GM10248 (cell line): ENCODE measurements at regions of chr15 and their contacts with region 1.

Region 1: DNA sequence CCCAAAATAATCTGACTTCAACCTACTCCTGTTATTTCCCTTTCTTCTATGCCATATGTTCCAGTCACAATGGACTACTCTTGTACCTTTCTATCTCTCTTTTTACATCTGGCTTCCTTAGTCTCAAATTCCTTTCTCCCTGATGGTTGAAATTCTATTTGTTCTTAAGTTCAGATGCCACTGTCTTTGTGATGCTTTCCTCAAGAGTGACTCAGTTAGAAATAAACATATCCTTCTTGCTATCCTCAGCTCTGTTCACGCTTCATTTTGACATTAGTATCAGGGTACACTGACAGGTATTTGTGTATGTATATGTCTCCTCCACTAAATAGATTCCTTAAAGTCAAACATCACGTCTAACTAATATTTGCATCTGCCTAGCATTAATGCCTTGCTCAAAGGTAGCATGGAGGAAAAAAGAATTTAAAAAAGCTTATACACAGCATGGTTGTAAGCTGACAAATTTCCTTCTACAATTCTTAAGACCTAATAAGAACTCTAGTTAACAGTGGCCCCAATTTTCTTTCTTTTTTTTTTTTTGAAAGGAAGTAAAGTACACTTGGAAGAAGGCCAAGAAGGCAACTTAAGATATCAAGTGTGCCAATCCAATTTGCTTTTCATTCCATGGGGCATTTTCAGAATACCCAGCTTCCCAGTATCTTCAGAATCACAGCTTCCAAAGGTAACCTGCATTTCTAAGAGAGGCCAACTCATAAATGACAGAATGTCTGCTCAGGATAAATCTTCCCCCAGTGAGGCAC is 58.0 kb downstream of the CHAC1 start:
- DNase-seq: no peak
- CTCF ChIP-seq: no peak

Region 2: DNA sequence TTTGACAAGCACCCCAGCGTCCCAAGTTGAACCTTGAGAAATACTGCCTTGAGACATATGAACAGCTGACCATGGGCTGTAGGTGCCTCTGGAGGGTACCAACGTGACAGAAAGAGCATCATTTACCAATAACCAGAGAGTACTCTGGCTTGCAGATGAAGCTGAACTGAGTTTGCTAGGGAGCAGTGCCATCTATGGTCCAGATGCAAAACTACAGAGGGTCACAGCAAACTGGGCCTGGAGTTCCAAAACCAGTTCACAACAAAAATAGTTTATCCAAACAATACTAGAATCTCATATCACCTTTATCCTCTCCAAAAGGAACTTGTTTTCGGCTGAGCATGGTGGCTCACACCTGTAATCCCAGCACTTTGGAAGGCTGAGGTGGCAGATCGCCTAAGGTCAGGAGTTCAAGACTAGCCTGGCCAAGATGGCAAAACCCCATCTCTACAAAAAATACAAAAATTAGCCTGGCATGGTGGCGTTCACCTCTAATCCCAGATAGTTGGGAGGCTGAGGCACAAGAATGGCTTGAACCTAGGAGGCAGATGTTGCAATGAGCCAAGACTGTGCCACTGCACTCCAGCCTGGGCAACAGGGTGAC is 11.4 kb after region 1 on chr15:
- CTCF ChIA-PET with region 1: interaction called, 13 read pairs
- POLR2A ChIA-PET with region 1: interaction called, 4 read pairs
- DNase-seq: peak; percentile 37
- CTCF ChIP-seq: peak; percentile 65

Region 3: DNA sequence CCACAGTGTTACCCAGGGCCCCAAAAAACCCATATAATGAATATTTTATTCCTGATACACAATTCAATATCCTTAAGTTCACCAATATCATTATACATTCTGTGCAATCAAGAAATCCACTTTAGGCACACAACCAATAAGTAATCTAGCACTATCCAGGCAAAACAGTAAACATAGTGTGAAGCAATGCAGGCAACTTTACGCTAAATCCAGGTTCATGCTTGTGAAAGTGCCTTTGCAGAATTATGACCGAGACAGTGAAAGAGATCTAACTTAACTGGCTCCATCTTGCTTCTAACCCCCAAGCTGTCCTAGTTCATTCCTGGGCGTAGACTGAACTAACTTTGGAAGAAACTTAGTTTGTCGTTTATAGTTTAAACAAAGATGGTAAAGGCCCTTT is 139.0 kb after region 1 on chr15:
- CTCF ChIA-PET with region 1: no interaction called
- POLR2A ChIA-PET with region 1: no interaction called
- DNase-seq: no peak
- CTCF ChIP-seq: no peak